Posterior cingulate gyrus (tissue), 11 donors: ENCODE measurements at regions of chr20 and their contacts with region 1.

Region 1: DNA sequence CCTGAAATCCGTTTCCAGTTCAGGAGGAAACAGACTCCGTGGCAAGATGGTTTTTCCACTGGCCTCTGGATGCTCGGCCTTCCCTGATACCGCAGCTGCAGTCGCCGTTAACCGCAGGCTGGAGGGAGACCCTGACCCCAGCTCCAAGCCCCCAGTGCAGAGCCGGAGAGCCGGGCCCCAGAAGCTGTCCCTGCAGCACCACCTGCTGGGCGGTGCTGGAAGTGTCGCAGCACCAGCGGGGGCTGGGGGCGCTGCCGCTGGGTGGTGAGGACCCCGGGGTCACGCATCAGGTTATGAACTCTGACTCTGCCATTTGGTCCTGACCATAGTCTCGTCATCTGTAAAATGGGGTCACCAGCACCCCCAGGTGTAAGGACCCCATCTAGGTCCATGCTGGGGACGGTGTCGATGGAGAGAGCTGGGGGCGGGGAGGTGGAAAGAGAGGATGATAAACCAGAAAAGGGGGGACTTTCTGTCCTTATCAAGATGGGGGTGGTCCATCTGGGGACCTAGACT is 20.7 kb upstream of the CHRNA4 start:
- DNase-seq: peak in 3 of 10 donors; percentile 39 to 86 (median 49)

Region 2: GRCh38 chr20:63223221-63224207 is 158.4 kb before region 1 on chr20:
- intact Hi-C with region 1: loop called (anchors 2 kb)
- DNase-seq: peak in 5 of 10 donors; percentile 38 to 88 (median 48)

Region 3: DNA sequence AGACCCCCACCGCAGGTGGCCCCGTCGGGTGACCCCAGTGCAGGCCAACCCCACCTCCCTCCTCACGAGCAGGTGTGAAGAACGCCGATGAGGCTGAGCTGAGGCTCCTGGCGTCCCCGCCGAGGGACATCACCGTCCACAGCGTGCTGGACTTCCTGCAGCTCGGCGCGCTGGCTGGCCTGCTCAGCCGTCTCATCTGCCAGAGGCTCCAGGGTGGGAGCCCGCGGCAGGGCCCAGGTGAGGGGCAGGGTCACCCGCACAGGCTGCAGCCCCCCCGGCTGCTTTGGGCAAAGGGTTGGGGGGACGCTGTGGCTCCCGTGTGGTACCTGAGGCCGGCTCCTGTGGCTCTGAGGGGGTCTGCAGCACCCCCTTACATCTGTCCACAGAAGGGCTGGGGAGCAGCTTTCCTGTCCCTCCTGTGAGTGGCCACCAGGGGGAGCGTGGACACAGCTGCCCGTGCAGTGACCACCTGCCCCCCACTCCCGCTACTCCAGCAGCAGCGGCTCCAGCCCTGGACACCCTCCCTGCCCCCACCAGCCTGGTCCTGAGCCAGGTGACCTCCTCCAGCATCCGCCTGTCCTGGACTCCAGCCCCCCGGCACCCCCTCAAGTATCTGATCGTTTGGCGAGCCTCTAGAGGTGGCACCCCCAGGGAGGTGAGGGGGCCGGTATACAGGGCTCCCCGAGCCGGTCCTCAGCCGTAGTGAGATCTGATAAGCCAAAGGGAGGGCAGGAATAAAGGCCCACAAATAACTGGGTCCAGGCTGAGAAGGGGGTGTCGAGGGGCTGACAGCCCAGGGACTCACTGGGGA is 72.4 kb before region 1 on chr20:
- intact Hi-C with region 1: loop called (anchors 1 kb)
- DNase-seq: peak in 9 of 10 donors; percentile 6 to 95 (median 62)